ENCODE measurements at regions of chr10 and their contacts with region 1.

Region 1: DNA sequence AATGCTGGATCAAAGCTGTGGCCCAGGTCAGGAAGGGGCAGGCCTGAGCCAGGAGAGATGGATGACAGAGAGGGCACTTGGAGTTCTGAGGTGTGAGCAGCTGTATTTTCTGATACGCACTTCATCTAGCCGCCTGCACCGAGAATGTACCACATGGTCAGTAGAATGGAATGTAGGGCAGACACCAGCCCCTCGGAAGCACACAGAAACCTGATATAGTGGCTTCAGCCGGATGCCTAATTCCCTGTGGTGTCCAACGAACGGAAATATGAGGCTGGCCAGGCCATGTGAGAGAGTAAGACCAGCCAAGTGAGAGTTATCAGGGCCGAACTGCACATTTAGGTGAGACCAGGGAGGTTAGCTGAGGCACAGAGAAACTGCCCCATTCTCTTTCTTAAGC is 46.7 kb upstream of the PLCE1 start:
- DNase-seq: peak; percentile 51 to 81
- ATAC-seq: peak; percentile 98 to 99 (median 99)
- H3K4me3 ChIP-seq: peak overlapping the region; percentile 2
- H3K27ac ChIP-seq: peak overlapping the region; percentile 89
- H3K4me1 ChIP-seq: peaks cover 39% of the 10 kb centered on the region
- H3K27me3 ChIP-seq: no peaks in the 10 kb centered on the region
- CTCF ChIP-seq: no peak

Region 2: DNA sequence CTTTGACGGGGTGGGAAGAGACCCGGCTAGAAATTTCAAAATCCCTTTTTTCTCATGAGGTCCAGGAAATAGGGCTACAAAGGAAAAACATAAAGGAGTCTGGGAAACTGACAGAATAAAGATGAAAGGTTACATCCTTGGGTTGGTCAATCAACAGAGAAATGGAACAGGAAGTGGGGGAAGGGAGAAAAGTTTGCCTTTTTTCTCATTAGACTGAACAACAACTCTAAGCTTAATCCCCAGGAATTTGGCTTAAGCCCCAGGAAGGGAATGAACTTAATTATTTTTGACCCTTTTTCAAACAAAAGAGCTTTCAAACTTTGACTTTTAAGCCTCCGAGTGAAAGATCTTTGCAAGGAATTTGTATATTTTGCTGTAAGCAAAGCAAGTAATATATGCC is 156.6 kb before region 1 on chr10:
- intact Hi-C with region 1: no loop called
- DNase-seq: no peak
- ATAC-seq: no peak
- H3K4me3 ChIP-seq: no peak overlapping the region
- H3K27ac ChIP-seq: no peak overlapping the region
- H3K4me1 ChIP-seq: no peaks in the 10 kb centered on the region
- H3K27me3 ChIP-seq: no peaks in the 10 kb centered on the region
- CTCF ChIP-seq: no peak

Region 3: GRCh38 chr10:93911866-93912265 is 35.2 kb before region 1 on chr10:
- intact Hi-C with region 1: no loop called
- DNase-seq: no peak
- ATAC-seq: no peak
- H3K4me3 ChIP-seq: no peak overlapping the region
- H3K27ac ChIP-seq: no peak overlapping the region
- H3K4me1 ChIP-seq: peaks cover 2% of the 10 kb centered on the region
- H3K27me3 ChIP-seq: no peaks in the 10 kb centered on the region
- CTCF ChIP-seq: no peak

Region 4: GRCh38 chr10:93993782-93994437 is 46.9 kb after region 1 on chr10 and contains the start of gene PLCE1:
- intact Hi-C with region 1: loop called in 1 of 2 experiments (anchors 5 kb)
- DNase-seq: peak; percentile 70 to 85
- ATAC-seq: peak; percentile 86 to 88 (median 86)
- H3K4me3 ChIP-seq: peak within 1 kb of the TSS; percentile 81
- H3K27ac ChIP-seq: peak within 1 kb of the TSS; percentile 86
- H3K4me1 ChIP-seq: peaks cover 26% of the 10 kb centered on the region
- H3K27me3 ChIP-seq: no peaks in the 10 kb centered on the region
- CTCF ChIP-seq: peak; percentile 10
- total RNA-seq, gene PLCE1: 2.8 to 11.5 (median 5.8) TPM

Region 5: GRCh38 chr10:94133239-94133638 is 186.2 kb after region 1 on chr10:
- intact Hi-C with region 1: loop called in 1 of 2 experiments (anchors 10 kb)
- DNase-seq: peak; percentile 61 to 87
- ATAC-seq: peak; percentile 93 to 99 (median 96)
- H3K4me3 ChIP-seq: no peak overlapping the region
- H3K27ac ChIP-seq: peak overlapping the region; percentile 5
- H3K4me1 ChIP-seq: peaks cover 21% of the 10 kb centered on the region
- H3K27me3 ChIP-seq: no peaks in the 10 kb centered on the region
- CTCF ChIP-seq: no peak